AG04450 (cell line): ENCODE measurements at regions of chr17 and their contacts with region 1.

Region 1: GRCh38 chr17:9427465-9428315 is 147.9 kb downstream of the STX8 start:
- DNase-seq: no peak
- H3K4me3 ChIP-seq: no peak overlapping the region
- H3K27ac ChIP-seq: no peak overlapping the region
- H3K27me3 ChIP-seq: no peaks in the 10 kb centered on the region
- CTCF ChIP-seq: no peak

Region 2: DNA sequence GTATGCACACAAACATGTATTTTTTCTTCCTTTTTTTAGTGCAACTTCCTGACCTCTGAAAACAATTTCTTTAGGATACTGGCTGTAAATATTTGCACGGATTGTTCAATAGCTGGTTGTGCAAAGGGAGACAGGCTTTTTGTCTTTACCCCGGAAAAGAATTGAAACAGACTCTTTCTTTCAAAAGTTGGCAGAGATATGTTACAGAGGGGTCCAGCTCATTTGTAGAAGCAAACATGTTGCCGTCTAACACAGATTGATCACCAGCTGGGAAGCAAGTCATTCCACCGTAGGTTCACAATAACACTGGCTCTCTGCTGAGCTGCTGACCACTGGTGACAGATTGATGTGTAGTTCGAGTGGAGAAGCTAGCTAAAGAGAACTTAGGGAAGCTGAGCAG is 17.0 kb after region 1 on chr17:
- CTCF ChIA-PET with region 1: no interaction called
- POLR2A ChIA-PET with region 1: no interaction called
- DNase-seq: no peak
- H3K4me3 ChIP-seq: no peak overlapping the region
- H3K27ac ChIP-seq: no peak overlapping the region
- H3K27me3 ChIP-seq: no peaks in the 10 kb centered on the region
- CTCF ChIP-seq: no peak

Region 3: GRCh38 chr17:9465210-9465921 is 37.7 kb after region 1 on chr17:
- CTCF ChIA-PET with region 1: interaction called, 12 read pairs
- POLR2A ChIA-PET with region 1: no interaction called
- DNase-seq: peak; percentile 38
- H3K4me3 ChIP-seq: no peak overlapping the region
- H3K27ac ChIP-seq: no peak overlapping the region
- H3K27me3 ChIP-seq: no peaks in the 10 kb centered on the region
- CTCF ChIP-seq: peak; percentile 35; the same call in 1 of the 2 replicates

Region 4: DNA sequence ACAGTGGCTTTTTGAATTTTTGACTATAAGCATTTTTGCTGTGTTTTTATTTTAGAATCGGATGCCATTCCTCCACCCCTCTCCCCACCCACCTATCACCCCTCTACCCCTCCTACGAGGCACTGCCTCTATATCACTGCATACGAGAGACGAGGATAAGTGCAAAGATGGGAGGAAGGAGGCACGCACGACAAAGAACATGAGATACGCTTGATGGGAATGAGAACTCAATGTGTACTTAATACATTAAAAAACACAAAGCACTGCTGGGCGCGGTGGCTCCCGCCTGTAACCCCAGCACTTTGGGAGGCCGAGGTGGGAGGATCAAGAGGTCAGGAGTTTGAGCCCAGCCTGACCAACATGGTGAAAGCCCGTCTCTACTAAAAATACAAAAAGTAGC is 208.8 kb after region 1 on chr17:
- CTCF ChIA-PET with region 1: no interaction called
- POLR2A ChIA-PET with region 1: no interaction called
- DNase-seq: no peak
- H3K4me3 ChIP-seq: no peak overlapping the region
- H3K27ac ChIP-seq: no peak overlapping the region
- H3K27me3 ChIP-seq: no peaks in the 10 kb centered on the region
- CTCF ChIP-seq: no peak